Activated CD4-positive, alpha-beta memory T cell treated with anti-CD3 and anti-CD28 coated beads for 36 hours (primary cell): ENCODE measurements at regions of chr21 and their contacts with region 1.

Region 1: DNA sequence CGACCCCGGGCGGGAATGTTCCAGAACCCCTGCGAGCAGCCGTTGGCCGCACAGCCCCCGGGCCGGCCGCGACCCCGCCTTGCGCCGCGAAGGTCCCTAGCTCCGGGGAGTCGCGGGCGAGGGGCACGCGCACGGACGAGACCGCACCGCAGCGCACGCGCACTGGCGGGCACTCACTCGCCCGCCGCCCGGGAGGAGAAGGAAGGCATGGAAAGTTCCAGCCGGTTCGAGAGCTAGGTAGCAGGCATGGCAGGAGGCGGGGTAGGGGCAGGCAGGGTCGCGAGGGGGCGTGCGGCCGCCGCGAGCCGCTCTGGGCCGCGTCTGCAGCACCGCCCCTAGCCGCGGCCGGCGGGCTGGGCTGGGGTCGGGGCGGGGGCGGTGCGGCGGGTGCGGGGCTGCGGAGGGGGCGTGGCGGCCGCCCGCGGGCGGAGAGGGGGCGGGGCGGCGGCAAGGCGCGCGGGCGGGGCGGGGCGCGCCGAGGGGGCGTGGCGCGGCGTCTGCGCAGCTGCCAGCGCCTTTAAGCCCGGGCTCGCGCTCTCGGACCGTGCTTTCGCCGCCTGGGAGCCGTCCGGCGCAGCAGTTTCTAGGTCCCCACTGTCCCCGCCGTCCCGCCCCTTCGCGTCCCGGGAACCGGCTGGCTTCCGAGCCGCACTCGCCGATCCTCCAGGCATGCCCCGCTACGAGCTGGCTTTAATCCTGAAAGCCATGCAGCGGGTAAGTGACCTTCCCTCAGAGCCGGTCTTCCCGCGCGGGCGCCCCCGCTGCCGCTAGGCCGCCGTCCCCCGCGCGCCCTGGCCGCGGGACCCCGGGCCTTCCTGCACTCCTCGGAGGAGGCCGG is at the starts of genes MRPS6 and SLC5A3:
- DNase-seq: peak; percentile 81
- H3K4me3 Mint-ChIP-seq: peak within 1 kb of the TSS; percentile 95
- H3K27ac Mint-ChIP-seq: peak within 1 kb of the TSS; percentile 87
- H3K4me1 Mint-ChIP-seq: peaks cover 41% of the 10 kb centered on the region
- H3K27me3 Mint-ChIP-seq: no peaks in the 10 kb centered on the region
- total RNA-seq, gene MRPS6: 114 to 117 TPM
- total RNA-seq, gene SLC5A3: 25.7 to 27.5 TPM

Region 2: GRCh38 chr21:33641336-33642026 is 431.8 kb before region 1 on chr21 and contains the start of gene CRYZL1:
- CTCF ChIA-PET with region 1: no interaction called
- POLR2A ChIA-PET with region 1: no interaction called
- intact Hi-C with region 1: loop called (anchors 10 kb)
- DNase-seq: peak; percentile 100
- H3K4me3 Mint-ChIP-seq: peak within 1 kb of the TSS; percentile 86
- H3K27ac Mint-ChIP-seq: peak within 1 kb of the TSS; percentile 93
- H3K4me1 Mint-ChIP-seq: peaks cover 24% of the 10 kb centered on the region
- H3K27me3 Mint-ChIP-seq: peaks cover 16% of the 10 kb centered on the region
- total RNA-seq, gene CRYZL1: 32.8 to 34.9 TPM

Region 3: DNA sequence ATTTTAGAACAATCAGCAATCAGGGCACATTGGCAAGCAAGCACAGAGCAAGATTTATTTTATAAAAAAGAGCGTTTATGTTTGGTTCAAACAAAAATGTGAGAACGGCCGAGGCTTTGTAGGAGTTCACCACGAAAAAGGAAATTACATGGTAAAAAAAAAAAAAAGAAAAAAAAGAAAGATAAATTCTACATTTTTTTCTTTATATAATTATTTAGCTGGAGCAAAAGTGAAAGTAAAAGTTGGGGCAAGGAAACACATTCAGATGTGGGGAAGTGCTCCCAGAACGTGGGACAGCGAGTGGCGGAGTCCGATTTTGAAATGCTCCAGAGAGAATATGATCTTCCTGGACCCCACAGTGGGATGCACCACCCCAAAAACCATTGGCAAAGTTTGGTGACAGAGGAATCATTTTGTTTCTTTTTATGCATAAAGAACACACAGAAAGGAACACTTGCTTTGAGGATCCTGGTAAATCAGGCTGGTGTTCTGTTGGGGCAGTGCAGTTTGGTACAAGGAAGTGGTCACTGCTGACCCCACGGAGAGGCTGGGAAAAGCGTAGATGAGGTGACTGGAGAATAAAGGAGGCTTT is 141.4 kb before region 1 on chr21:
- CTCF ChIA-PET with region 1: interaction called, 5 read pairs
- POLR2A ChIA-PET with region 1: interaction called, 4 read pairs
- intact Hi-C with region 1: loop called (anchors 2 kb)
- DNase-seq: no peak
- H3K4me3 Mint-ChIP-seq: peak overlapping the region; percentile 92
- H3K27ac Mint-ChIP-seq: peak overlapping the region; percentile 99
- H3K4me1 Mint-ChIP-seq: peaks cover 41% of the 10 kb centered on the region
- H3K27me3 Mint-ChIP-seq: no peaks in the 10 kb centered on the region

Region 4: DNA sequence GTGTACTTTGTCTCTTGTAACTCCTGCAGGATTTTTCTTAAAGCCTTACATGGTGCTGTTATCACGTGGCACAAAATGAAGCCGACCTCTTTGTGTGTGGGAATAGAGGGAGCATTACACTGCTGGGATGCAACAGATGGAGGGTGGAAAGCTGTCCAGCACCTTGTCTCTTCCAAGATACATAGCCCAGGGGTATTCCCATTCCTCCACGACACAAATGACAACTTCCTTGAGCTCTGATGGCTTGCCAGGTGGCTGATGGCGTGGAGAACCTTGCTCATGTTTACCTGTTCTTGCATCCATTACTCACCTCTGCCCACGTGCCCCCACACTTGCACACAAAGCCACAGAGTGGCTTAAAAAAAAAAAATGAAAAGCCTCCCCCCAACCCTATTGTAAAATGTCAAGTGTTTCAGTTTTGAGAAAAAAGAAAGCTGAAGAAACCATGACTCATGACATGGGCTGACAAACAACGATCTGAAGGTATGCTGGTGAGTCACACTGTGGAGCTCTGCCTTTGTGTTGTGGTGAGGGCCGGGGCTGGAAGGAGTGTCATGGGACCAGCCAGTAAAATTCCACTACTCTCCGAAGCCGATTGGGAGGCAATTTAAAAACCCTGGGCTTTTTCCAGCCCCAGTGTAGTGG is 125.7 kb before region 1 on chr21:
- CTCF ChIA-PET with region 1: interaction called, 6 read pairs
- POLR2A ChIA-PET with region 1: interaction called, 53 read pairs
- intact Hi-C with region 1: loop called (anchors 1 kb)
- DNase-seq: peak; percentile 92
- H3K4me3 Mint-ChIP-seq: peak overlapping the region; percentile 62
- H3K27ac Mint-ChIP-seq: peak overlapping the region; percentile 97
- H3K4me1 Mint-ChIP-seq: peaks cover 72% of the 10 kb centered on the region
- H3K27me3 Mint-ChIP-seq: peaks cover 4% of the 10 kb centered on the region

Region 5: DNA sequence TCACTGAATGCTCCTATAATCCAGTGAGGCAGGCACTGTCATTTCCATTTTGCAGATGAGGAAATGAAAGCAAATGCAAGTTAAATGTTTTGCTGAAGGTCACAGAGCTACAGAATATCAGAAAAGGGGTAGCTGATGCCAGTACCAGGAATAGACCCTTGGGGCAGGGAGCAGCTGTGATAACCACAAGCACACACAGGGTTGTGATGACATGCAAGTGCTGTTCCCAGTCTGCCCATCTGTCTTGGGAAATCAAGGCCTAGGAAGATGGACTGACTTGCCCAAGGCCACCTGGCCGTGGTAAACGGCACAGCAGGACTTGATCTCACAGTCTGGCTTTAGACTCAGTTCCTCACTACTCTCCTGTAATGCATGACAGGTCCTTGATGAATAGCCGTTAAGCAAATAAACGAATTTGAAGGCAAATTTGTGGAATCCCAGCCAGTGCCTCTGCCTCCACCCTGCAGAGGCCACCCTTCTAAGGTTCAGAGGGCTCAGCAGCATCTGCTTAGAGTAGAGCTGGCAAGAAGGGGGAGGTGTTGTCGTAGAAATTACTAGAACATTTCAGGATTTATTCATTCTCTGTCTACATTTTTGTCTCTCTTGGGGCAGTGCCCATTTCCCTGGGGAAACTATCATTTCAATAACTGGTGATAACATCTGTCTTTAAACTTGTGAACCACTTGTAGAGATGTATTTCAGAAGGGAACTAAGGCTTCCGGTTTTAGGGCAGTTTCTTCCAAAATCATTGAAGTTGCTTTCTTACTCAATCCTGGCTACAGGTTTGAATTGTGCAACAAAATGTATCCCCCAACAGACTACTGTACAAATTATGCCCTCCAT is 53.0 kb before region 1 on chr21:
- CTCF ChIA-PET with region 1: no interaction called
- POLR2A ChIA-PET with region 1: interaction called, 3 read pairs
- intact Hi-C with region 1: loop called (anchors 5 kb)
- DNase-seq: no peak
- H3K4me3 Mint-ChIP-seq: no peak overlapping the region
- H3K27ac Mint-ChIP-seq: no peak overlapping the region
- H3K4me1 Mint-ChIP-seq: peaks cover 20% of the 10 kb centered on the region
- H3K27me3 Mint-ChIP-seq: no peaks in the 10 kb centered on the region

Region 6: GRCh38 chr21:34202553-34203372 is 129.5 kb after region 1 on chr21:
- CTCF ChIA-PET with region 1: no interaction called
- POLR2A ChIA-PET with region 1: no interaction called
- intact Hi-C with region 1: loop called (anchors 2 kb)
- DNase-seq: no peak
- H3K4me3 Mint-ChIP-seq: no peak overlapping the region
- H3K27ac Mint-ChIP-seq: no peak overlapping the region
- H3K4me1 Mint-ChIP-seq: peaks cover 25% of the 10 kb centered on the region
- H3K27me3 Mint-ChIP-seq: peaks cover 3% of the 10 kb centered on the region